Activated T-helper 1 cell treated with anti-CD3 and anti-CD28 coated beads, Interleukin-12 subunit alpha, Interleukin-12 subunit beta, Interleukin-2, Interleukin-4 antibody, amounts not matched to agents 30 ng/mL and 10 ng/mL and 1 ng/mL, durations not matched to agents 14 hours and 24 hours and 36 hours (primary cell): ENCODE measurements at regions of chr12 and their contacts with region 1.

Region 1: DNA sequence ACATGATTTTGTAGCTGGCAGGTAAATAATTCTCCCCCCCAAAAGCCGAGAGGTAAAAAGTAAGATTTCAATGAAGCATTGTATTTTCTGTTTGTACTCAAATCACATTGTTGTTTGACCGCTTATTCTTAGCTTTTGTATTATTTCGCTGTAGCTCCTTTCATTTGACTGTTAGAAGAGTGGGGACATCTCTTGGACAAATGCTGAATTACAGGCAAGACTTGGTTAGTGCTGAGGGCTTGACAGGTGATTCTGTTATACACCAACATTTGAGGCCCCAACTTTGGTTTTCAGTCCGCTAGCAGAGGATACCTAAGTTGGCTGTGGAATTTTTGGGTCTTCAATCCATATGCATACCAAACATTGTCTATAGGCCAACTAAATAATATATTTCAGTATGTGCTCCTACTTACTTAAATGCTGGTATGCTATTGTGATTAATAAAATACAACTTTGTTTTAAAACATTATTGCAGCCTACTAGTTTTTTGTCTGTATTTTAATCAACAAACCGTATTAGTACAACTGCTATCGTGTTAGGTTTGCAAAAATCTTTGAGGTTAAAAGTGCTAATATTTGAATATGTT is 102.2 kb downstream of the ERC1 start:
- DNase-seq: peak; percentile 6
- H3K4me3 Mint-ChIP-seq: no peak overlapping the region
- H3K27ac Mint-ChIP-seq: no peak overlapping the region
- H3K4me1 Mint-ChIP-seq: peaks cover 12% of the 10 kb centered on the region
- H3K27me3 Mint-ChIP-seq: no peaks in the 10 kb centered on the region

Region 2: DNA sequence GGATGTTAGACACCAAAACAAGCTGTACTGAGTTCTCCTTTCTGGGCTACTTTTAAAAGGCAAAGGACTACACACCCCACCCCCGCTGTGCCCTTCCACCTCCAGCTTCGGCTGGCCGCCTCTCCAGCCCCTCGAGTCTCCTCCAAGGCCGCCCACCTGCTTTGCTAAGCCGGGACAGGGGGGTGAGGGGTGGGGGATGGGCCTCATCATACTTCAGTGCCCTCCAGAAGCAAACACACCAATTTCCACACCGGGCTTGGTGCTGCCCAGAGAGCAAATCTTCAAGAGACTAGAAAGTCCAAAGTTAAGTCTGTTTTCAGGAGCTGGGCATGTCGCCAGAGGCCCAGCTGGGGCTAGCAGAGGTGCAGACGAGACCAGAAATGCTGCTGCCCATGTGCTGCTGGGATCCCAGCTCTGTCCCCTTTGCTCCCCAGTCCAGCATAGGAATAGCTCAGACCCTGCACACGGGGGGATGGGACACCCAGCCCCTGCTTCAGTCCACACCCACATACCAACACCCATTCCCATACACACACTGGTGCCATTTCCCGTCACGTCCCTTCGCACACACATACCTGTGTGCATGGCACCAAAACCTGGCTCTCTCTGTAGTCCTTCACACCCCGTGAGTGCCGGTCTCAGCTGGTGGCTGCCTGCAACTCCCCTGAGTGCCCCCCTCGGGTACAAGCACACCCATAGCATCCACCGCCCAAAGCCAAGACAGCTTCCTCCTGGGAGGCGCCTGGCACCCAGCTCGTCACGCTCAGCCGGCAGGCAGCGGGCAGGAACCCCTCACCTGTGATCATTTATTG is 880.3 kb before region 1 on chr12:
- intact Hi-C with region 1: no loop called
- DNase-seq: no peak
- H3K4me3 Mint-ChIP-seq: no peak overlapping the region
- H3K27ac Mint-ChIP-seq: no peak overlapping the region
- H3K4me1 Mint-ChIP-seq: no peaks in the 10 kb centered on the region
- H3K27me3 Mint-ChIP-seq: peaks cover 4% of the 10 kb centered on the region

Region 3: DNA sequence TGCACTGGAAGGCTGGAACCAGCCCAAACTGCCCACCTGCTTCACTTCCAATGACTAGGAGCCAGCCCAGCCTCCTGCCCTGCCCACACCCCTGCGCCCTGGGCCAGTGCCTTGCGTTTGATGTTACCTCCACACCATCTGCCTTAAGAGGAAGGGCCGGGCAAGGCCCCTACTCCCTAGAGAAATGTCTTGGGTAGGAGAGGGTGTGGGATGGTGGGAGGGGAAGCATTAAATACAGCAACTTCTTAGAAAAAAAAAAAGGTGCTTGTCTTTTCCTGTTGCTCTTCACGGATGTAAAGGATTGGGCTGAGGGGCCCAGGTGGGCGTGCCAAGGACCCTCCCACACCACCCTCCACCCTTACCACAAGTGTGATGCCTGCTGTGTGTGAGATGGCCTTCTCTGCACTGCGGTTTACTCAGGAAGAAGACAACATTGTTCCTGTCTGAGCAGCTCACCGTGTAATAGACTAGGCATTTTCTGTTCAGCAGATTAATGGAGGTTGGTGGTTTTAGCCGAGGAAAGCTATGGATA is 529.9 kb before region 1 on chr12:
- intact Hi-C with region 1: loop called (anchors 5 kb)
- DNase-seq: peak; percentile 65
- H3K4me3 Mint-ChIP-seq: peak overlapping the region; percentile 45
- H3K27ac Mint-ChIP-seq: peak overlapping the region; percentile 85
- H3K4me1 Mint-ChIP-seq: peaks cover 74% of the 10 kb centered on the region
- H3K27me3 Mint-ChIP-seq: no peaks in the 10 kb centered on the region

Region 4: DNA sequence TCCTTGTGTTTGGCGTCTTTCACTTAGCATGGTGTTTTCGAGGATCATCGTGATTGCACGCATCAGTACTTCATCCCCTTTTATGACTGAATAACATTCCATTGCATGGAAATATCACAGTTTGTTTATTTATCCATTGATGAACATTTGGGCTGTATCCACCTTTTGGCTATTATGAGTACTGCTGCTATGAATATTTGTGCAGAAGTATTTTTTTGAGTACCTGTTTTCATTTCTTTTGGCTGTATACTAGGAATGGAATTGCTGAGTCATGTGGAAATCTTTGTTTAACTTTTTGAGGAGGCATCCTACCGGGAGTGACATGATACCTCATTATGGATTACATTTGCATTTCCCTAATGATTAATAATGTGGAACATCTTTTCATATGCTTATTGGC is 274.5 kb before region 1 on chr12:
- intact Hi-C with region 1: loop called (anchors 5 kb)
- DNase-seq: no peak
- H3K4me3 Mint-ChIP-seq: no peak overlapping the region
- H3K27ac Mint-ChIP-seq: no peak overlapping the region
- H3K4me1 Mint-ChIP-seq: peaks cover 66% of the 10 kb centered on the region
- H3K27me3 Mint-ChIP-seq: no peaks in the 10 kb centered on the region

Region 5: DNA sequence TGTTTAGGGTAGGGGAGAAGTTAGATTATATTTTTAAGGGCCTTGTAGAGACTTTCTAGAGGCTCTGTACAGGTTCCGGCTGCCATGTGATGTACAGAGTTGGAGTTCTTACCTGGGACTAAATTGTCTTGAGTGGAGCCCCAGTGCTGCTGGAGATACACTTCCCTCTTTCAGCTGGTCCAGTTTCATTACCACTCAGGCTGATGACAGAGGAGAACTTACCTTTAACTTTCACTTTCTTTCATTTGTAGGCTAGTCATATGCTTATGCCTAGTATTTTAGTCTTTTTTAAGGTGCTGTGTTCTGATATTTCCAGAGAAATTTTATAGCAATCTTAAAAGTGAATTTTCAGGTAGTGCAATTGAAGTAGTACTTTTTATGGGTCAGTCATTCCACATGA is 15.0 kb after region 1 on chr12:
- intact Hi-C with region 1: no loop called
- DNase-seq: no peak
- H3K4me3 Mint-ChIP-seq: no peak overlapping the region
- H3K27ac Mint-ChIP-seq: no peak overlapping the region
- H3K4me1 Mint-ChIP-seq: peaks cover 17% of the 10 kb centered on the region
- H3K27me3 Mint-ChIP-seq: no peaks in the 10 kb centered on the region